ENCODE measurements at regions of chr12 and their contacts with region 1.

Region 1: GRCh38 chr12:40107098-40107802 is 1.4 kb upstream of the SLC2A13 start:
- DNase-seq: peak; percentile 83
- H3K4me3 Mint-ChIP-seq: peak overlapping the region; percentile 76
- H3K27ac Mint-ChIP-seq: no peak overlapping the region
- H3K4me1 Mint-ChIP-seq: peaks cover 14% of the 10 kb centered on the region
- H3K27me3 Mint-ChIP-seq: no peaks in the 10 kb centered on the region
- CTCF ChIP-seq: peak; percentile 79

Region 2: GRCh38 chr12:39764944-39765560 is 342.2 kb before region 1 on chr12:
- CTCF ChIA-PET with region 1: interaction called, 34 read pairs
- POLR2A ChIA-PET with region 1: no interaction called
- intact Hi-C with region 1: loop called (anchors 1 kb)
- DNase-seq: peak; percentile 47
- H3K4me3 Mint-ChIP-seq: no peak overlapping the region
- H3K27ac Mint-ChIP-seq: no peak overlapping the region
- H3K4me1 Mint-ChIP-seq: no peaks in the 10 kb centered on the region
- H3K27me3 Mint-ChIP-seq: no peaks in the 10 kb centered on the region
- CTCF ChIP-seq: peak; percentile 85

Region 3: DNA sequence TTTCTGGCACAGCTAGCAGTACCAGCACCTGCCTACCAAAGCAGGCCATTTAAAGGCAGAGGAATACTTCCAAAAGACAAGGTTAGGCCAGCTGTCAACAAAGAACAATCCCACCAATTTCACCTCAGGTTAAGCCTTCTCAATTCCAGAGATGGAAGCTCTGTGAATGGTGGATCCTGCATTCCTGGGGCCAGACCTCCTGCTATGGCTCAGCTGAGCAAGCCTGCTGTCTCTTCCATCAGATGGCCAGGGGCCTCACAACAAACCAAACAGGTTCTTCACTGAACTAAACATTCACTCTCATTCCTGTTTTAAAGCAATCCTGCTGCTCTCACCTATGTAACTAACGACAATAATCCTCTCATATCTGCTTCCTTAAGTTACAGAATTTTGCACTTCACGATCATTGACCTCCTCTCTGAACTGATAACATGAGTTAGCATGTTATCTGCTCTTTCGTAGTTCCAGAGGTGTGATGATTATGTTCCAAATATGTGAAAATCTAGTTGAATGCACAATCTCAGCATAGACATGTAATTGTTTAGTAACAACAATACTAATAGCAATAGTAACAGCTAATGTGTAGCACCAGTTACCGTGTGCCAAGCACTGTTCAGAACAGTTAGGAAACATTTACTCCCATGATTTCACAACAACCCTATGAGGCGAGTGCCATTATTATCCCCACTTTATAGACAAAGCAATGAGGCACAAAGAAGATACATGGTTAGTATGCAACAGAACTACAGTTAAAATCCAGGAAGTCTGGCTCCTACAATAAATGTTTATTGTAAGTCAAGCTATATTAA is 74.6 kb before region 1 on chr12:
- CTCF ChIA-PET with region 1: interaction called, 15 read pairs
- POLR2A ChIA-PET with region 1: interaction called, 3 read pairs
- intact Hi-C with region 1: loop called (anchors 5 kb)
- DNase-seq: no peak
- H3K4me3 Mint-ChIP-seq: no peak overlapping the region
- H3K27ac Mint-ChIP-seq: no peak overlapping the region
- H3K4me1 Mint-ChIP-seq: peaks cover 6% of the 10 kb centered on the region
- H3K27me3 Mint-ChIP-seq: no peaks in the 10 kb centered on the region
- CTCF ChIP-seq: no peak

Region 4: GRCh38 chr12:40117818-40118217 is 10.6 kb after region 1 on chr12:
- CTCF ChIA-PET with region 1: interaction called, 55 read pairs
- POLR2A ChIA-PET with region 1: interaction called, 7 read pairs
- intact Hi-C with region 1: no loop called
- DNase-seq: no peak
- H3K4me3 Mint-ChIP-seq: no peak overlapping the region
- H3K27ac Mint-ChIP-seq: no peak overlapping the region
- H3K4me1 Mint-ChIP-seq: no peaks in the 10 kb centered on the region
- H3K27me3 Mint-ChIP-seq: no peaks in the 10 kb centered on the region
- CTCF ChIP-seq: no peak

Region 5: DNA sequence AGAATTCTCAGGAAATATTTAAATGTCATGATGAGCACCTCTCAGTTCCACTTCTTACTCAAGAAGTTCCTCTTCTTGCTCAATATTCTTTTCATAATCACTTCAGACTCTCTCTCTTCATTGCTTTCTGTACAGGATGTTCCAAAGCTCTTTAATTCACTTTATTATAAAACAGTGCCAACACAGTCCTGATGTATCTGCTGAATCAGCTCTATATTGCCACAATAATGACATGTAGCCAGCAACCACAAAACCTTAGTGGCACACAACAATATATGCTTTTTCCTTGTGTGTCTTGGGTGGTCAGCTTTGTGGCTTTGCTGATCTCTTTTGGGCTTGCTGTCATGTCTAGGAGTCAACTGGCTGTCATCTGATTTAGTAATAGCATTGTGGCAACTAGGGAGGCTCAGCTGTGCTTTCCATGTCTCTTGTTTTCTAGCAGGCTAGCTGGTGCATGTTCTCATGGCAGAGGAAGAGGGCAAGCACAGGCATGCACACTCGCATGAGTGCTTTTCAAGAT is 51.4 kb after region 1 on chr12:
- CTCF ChIA-PET with region 1: interaction called, 4 read pairs
- POLR2A ChIA-PET with region 1: interaction called, 12 read pairs
- intact Hi-C with region 1: no loop called
- DNase-seq: peak; percentile 94
- H3K4me3 Mint-ChIP-seq: peak overlapping the region; percentile 56
- H3K27ac Mint-ChIP-seq: peak overlapping the region; percentile 90
- H3K4me1 Mint-ChIP-seq: peaks cover 21% of the 10 kb centered on the region
- H3K27me3 Mint-ChIP-seq: no peaks in the 10 kb centered on the region
- CTCF ChIP-seq: no peak

Region 6: GRCh38 chr12:40192704-40193255 is 85.5 kb after region 1 on chr12:
- CTCF ChIA-PET with region 1: no interaction called
- POLR2A ChIA-PET with region 1: no interaction called
- intact Hi-C with region 1: no loop called
- DNase-seq: no peak
- H3K4me3 Mint-ChIP-seq: no peak overlapping the region
- H3K27ac Mint-ChIP-seq: no peak overlapping the region
- H3K4me1 Mint-ChIP-seq: no peaks in the 10 kb centered on the region
- H3K27me3 Mint-ChIP-seq: no peaks in the 10 kb centered on the region
- CTCF ChIP-seq: no peak

Region 7: GRCh38 chr12:40253936-40254335 is 146.7 kb after region 1 on chr12:
- CTCF ChIA-PET with region 1: no interaction called
- POLR2A ChIA-PET with region 1: no interaction called
- intact Hi-C with region 1: no loop called
- DNase-seq: peak; percentile 16
- H3K4me3 Mint-ChIP-seq: no peak overlapping the region
- H3K27ac Mint-ChIP-seq: no peak overlapping the region
- H3K4me1 Mint-ChIP-seq: no peaks in the 10 kb centered on the region
- H3K27me3 Mint-ChIP-seq: no peaks in the 10 kb centered on the region
- CTCF ChIP-seq: no peak

Region 8: DNA sequence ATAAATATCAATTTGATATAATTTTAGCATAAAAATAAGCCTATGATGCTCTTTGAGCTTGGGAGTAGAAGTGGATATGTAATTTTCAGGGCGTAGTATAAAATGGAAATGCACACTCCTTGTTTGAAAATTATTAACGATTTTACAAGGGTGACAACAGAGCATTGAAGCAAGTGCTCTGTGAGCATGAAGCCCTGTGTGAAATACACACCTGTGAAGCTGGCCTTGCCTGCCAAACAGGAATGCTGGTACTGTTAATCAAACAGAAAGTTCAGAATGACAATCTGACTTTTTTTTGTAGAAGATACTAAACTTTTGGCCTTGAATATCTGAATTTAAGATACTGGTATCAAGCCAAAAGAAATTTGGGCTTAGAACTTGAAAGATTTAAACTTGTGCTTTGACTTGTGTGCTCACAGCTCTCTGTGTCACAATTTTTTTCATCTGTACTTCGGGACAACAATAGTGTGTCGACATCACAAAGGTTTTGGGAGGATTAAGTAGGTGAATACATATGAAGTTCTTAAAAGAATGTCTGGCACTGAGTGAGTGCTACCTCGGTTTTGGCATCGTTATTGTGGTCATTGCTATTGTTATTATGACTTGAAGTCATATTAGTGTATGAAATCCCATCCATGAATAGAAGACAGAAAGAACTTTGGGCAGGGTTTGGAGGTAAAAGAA is 164.9 kb after region 1 on chr12:
- CTCF ChIA-PET with region 1: no interaction called
- POLR2A ChIA-PET with region 1: no interaction called
- intact Hi-C with region 1: no loop called
- DNase-seq: peak; percentile 8
- H3K4me3 Mint-ChIP-seq: no peak overlapping the region
- H3K27ac Mint-ChIP-seq: no peak overlapping the region
- H3K4me1 Mint-ChIP-seq: no peaks in the 10 kb centered on the region
- H3K27me3 Mint-ChIP-seq: no peaks in the 10 kb centered on the region
- CTCF ChIP-seq: no peak